Sciatic nerve (tissue), 2 donors: ENCODE measurements at regions of chr2 and their contacts with region 1.

Region 1: GRCh38 chr2:216664593-216665034 is 30.7 kb downstream of the IGFBP5 start:
- DNase-seq: no peak
- ATAC-seq: no peak

Region 2: DNA sequence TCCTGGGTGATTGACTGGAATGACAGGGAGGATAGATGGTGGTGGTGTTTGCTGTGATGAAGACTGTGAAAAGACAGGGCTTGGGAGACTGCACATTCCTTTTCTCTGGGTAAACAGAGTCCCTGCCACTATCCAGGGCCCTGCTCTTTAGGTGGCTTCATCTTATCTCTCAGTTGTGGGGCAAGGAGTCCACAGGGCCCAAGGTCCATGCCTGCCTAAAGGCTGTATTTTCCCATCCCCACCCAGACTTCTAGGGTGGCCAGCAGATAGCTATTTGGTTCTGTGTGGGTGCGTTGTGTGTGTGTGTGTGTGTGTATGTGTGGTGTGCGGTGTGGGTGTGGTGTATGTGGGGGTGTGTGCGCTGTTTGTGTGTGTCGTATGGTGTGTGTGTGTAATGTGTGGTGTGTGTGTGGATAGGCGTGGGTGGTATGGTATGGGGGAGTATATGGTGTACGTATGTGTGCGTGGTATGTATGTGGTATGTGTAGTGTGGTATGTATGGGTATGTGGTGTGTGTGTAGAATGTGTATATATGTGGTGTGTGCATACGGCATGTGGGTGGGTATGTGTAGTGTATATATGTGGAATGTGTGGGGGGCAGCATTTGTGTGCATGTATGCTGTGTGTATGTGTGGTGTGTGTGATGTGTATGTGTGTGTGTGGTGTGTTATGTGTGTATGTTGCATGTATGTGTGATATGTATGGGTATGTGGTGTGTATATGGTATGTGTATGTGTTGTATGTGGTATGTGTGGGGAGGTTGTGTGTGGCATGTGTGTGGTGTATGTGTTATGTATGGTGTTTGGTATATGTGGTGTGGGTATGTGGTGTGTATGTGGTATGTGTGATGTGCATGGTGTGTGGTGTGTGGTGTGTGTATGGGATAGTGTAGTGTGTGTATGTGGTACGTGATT is 565.9 kb before region 1 on chr2:
- intact Hi-C with region 1: no loop called
- DNase-seq: no peak
- ATAC-seq: no peak

Region 3: GRCh38 chr2:216519154-216519762 is 145.4 kb before region 1 on chr2:
- intact Hi-C with region 1: loop called (anchors 2 kb)
- DNase-seq: peak; percentile 78
- ATAC-seq: peak; percentile 85

Region 4: DNA sequence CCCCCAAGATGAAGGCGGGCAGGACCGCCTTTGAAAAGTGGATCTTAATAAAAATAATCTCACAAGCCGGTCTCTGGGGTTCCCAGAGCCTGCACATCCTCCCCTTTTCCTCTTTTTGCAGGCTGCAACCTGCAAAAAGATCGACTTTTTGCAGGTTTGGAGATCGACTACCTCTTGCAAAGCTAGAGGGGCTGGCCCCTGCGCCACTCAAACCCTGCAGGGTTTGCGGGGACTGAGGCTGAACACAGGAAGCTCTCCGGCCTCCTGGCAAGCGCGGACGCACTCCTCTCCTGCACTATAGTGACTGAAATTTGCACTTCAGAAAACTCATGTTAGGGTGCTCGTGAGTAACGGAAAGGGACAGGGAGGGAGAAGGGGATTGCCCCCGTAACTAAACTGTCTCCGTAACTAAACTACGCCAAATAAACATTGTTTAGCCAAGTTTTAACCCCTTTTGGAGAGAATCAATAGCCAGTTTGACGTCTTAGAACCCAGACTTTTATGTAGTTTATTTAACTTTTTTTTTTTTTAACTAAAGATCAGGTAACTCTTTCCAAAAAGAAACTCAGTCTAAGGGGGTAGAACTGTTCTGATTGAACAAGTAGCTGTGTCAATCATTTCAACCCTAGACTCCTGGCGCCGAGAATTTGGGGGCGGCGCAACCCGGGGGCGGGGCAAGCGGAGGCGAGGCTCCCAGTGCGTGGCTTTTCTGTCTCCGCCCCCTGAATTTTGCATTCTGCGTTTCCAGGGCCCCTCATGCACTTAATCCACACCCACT is 28.2 kb after region 1 on chr2:
- intact Hi-C with region 1: no loop called
- DNase-seq: peak; percentile 93
- ATAC-seq: peak; percentile 72

Region 5: GRCh38 chr2:216717491-216717901 is 52.9 kb after region 1 on chr2:
- intact Hi-C with region 1: no loop called
- DNase-seq: no peak
- ATAC-seq: no peak